SK-N-SH (cell line): ENCODE measurements at regions of chr2 and their contacts with region 1.

Region 1: GRCh38 chr2:48946449-48947048 is 191.0 kb upstream of the LHCGR start:
- DNase-seq: peak; percentile 60
- H3K4me3 ChIP-seq: no peak overlapping the region; a peak in 1 of 4 replicates
- H3K27ac ChIP-seq: no peak overlapping the region
- H3K4me1 ChIP-seq: no peaks in the 10 kb centered on the region; a peak in 1 of 4 replicates
- H3K27me3 ChIP-seq: no peaks in the 10 kb centered on the region
- CTCF ChIP-seq: peak; percentile 89
- EP300 ChIP-seq: no peak
- RAD21 ChIP-seq: peak; percentile 97

Region 2: DNA sequence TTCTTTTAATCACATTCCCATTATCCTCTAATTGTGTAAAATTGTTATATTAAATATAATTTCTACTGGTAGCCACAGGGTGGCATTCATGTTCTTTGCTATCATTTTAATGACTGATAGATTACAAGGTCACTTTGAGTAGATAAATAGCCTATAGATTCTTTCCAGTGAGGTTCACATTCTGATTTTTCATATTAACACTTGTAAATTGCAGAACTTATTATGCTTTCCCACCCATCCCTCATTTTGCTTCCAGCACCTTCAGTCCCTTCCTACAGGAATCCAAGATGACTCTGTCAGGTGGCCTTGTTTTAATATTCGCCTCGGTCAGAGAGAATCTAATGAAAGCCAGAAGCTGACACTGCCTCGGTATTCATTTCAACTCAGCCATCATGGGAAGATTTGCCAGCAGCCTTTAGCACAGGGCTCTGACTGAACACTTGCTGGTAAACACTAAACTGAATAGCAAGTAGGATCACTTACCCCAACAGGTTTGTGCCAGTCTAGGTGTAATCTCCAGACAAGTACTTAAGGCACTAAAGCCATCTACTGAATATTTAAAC is 308.9 kb after region 1 on chr2:
- CTCF ChIA-PET with region 1: interaction called, 18 read pairs
- POLR2A ChIA-PET with region 1: no interaction called
- DNase-seq: peak; percentile 33
- H3K4me3 ChIP-seq: no peak overlapping the region
- H3K27ac ChIP-seq: no peak overlapping the region
- H3K4me1 ChIP-seq: peaks cover 0 to 2% of the 10 kb centered on the region in 2 experiments; a peak in 2 of 4 replicates
- H3K27me3 ChIP-seq: no peaks in the 10 kb centered on the region
- CTCF ChIP-seq: peak; percentile 16
- EP300 ChIP-seq: peak in 1 of 2 experiments; percentile 15; a peak in 1 of 4 replicates
- RAD21 ChIP-seq: peak; percentile 64